ENCODE measurements at regions of chr15 and their contacts with region 1.

Region 1: GRCh38 chr15:61834076-61834697 is 226.1 kb downstream of the VPS13C start:
- DNase-seq: no peak
- H3K4me3 ChIP-seq: no peak overlapping the region
- H3K27ac ChIP-seq: no peak overlapping the region
- H3K4me1 ChIP-seq: no peaks in the 10 kb centered on the region
- H3K27me3 ChIP-seq: no peaks in the 10 kb centered on the region
- CTCF ChIP-seq: peak; percentile 70 to 85 (median 80)
- POLR2A ChIP-seq: no peak

Region 2: GRCh38 chr15:60496853-60497252 is 1337.3 kb before region 1 on chr15:
- intact Hi-C with region 1: no loop called
- DNase-seq: no peak
- H3K4me3 ChIP-seq: no peak overlapping the region
- H3K27ac ChIP-seq: no peak overlapping the region
- H3K4me1 ChIP-seq: no peaks in the 10 kb centered on the region
- H3K27me3 ChIP-seq: no peaks in the 10 kb centered on the region
- CTCF ChIP-seq: no peak
- POLR2A ChIP-seq: no peak

Region 3: DNA sequence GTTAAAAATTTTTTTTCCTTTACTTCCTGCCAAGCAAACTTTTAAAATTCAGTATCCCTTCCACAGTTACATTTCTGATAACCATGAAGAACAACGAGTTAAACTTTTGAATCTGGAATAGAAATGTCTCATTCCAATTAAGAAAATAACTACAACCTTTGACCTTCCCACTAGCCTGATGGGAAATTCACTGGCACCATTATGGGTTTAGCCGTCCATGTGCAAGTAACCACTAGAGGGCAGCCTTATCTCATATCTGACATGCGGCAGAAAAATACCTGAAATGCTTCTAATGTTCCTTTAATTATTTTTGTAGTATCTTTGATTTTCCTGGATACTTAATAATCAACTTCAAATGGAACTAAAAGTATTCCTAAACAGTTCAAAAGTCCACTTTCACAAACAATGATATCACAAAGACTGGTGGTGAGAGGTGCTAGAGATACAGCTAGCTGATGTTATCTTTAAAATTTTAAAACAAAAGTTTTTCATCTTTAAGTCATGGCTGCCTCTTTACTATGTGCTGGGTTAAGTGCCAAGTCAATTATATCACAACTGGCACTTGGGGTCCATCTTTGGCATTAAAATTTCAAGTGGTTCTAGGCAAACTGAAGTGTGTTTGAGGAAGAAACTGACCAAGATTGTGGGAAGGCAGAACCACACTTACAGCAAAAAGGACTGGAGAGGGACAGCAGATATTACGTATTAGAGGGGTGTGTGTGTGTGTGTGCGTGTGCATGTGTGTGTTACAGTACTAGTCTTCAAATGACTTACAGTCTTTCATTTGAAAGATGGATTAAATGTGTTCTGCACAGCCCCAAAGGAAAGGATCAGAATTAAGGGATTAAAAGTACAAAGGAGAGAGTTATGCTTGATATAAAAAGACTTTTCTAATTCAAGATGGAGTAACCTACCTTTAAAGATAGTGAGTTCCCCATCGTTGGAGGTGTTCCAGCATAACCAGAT is 1248.2 kb before region 1 on chr15:
- intact Hi-C with region 1: loop called (anchors 10 kb)
- DNase-seq: no peak
- H3K4me3 ChIP-seq: no peak overlapping the region
- H3K27ac ChIP-seq: peak overlapping the region; percentile 15
- H3K4me1 ChIP-seq: peaks cover 51% of the 10 kb centered on the region
- H3K27me3 ChIP-seq: no peaks in the 10 kb centered on the region
- CTCF ChIP-seq: peak; percentile 78 to 92 (median 82)
- POLR2A ChIP-seq: no peak

Region 4: GRCh38 chr15:61811952-61812351 is 22.2 kb before region 1 on chr15:
- intact Hi-C with region 1: no loop called
- DNase-seq: peak in 1 of 2 donors; percentile 65
- H3K4me3 ChIP-seq: no peak overlapping the region
- H3K27ac ChIP-seq: no peak overlapping the region
- H3K4me1 ChIP-seq: no peaks in the 10 kb centered on the region
- H3K27me3 ChIP-seq: no peaks in the 10 kb centered on the region
- CTCF ChIP-seq: no peak
- POLR2A ChIP-seq: no peak

Region 5: DNA sequence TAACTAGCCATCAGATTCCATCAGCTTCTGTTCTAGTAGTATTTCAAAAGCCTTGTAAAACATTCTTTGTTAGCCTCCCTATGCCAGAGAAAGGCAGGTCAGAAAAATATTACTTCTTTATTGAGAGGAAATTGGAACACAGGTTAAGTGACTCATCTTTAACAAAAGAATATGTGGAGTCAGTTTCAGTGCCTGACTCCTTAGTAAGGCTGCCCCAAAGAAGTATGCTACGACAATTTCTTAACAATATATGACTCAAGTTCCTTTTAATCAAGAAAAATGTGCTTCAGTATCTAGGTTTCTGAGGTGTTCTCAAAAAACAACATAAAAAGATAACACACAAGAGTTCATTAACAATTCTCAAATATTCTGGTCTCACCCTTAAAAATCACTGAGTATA is 86.9 kb after region 1 on chr15:
- intact Hi-C with region 1: no loop called
- DNase-seq: no peak
- H3K4me3 ChIP-seq: no peak overlapping the region
- H3K27ac ChIP-seq: no peak overlapping the region
- H3K4me1 ChIP-seq: no peaks in the 10 kb centered on the region
- H3K27me3 ChIP-seq: no peaks in the 10 kb centered on the region
- CTCF ChIP-seq: no peak
- POLR2A ChIP-seq: no peak

Measured in vagina (tissue), 2 donors.